ENCODE measurements at regions of chr2 and their contacts with region 1.

Region 1: GRCh38 chr2:50143822-50144575 is 887.9 kb downstream of the NRXN1 start:
- DNase-seq: peak in 1 of 10 donors; percentile 13

Region 2: DNA sequence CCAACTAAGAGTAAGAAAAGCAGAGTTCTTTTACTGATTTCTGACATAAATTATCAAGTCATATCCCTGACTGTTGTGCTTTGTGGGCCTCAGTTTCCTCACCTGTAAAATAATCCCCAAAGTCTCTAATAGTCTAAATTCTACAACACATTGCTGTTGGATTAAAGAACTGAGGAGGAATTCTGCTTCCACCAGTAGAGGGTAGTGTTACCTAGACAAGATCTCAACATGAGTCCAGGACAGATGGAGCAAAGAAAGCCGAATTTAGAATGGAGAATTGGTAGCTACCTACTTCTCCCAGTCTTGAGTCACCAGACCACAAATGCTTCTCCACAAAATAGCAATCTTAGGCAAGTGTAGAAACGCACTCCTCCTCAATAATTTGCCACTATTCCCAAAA is 527.2 kb before region 1 on chr2:
- intact Hi-C with region 1: loop called (anchors 5 kb)
- DNase-seq: no peak

Region 3: GRCh38 chr2:49687918-49688317 is 456.1 kb before region 1 on chr2:
- intact Hi-C with region 1: loop called (anchors 5 kb)
- DNase-seq: no peak

Region 4: DNA sequence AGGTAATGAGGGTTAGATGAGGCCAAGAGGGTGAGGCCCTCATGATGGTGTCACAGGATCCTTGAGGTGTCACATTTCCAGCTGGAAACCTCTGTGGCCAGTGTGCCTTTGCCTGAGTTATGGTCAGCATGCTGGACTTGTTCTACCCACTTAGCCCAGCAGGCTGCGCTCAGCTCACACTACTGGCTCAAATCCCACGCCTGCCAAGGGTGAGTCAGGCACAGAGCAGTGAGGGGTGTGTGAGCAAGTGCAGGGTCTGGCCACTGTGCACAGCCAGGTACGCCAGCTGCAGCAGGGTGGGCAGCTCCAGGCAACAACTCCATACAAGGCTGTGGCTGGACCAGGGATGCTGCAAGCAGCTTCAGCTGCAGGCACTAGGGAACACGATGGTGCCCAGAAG is 373.1 kb before region 1 on chr2:
- intact Hi-C with region 1: loop called (anchors 1 kb)
- DNase-seq: peak in 9 of 10 donors; percentile 18 to 90 (median 68)